ENCODE measurements at regions of chr12 and their contacts with region 1.

Region 1: GRCh38 chr12:108514973-108515814 is at the start of gene FICD:
- DNase-seq: peak; percentile 100
- ATAC-seq: peak; percentile 97 to 98
- total RNA-seq, gene FICD: 4.6 to 6.3 TPM

Region 2: DNA sequence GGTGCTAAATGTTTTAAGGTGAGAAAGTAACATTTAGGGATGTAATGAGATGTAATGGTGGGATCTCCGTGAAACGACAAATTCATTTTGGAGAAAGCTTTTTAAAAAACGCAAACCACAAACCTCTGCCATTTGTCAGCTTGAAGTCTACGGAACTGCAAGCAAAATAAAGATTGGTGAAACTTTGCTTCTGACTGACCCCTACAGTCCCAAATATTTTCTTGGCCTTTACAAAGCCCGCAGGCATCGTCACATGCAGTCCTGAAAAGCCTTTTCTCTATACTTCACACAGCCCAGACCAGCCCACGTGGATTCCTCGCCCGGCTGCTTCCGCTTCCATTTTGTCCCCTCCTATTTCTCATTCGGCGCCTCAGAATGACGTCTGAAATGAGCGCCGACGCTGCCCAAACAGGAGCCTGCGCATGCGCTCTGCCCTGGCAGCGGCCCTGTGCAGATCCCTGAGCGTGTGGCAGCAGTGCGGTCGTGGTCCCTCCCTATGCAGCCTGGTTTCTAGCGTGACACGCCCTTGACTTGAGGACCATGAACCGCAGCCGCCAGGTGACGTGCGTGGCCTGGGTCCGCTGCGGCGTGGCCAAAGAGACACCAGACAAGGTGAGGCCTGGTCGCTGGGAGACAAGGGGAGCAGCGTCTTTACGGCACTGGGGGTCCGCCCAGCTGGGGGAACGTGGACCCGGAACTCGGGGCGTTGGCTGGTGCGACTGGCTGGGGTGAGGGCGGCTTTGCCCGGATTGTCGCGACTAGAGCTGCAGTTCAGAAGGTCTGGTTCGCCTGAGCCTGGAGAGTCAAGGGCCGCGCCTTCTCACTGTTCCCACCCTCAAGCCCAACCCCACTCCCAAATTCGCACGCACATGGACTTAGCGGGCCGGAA is 829.6 kb before region 1 on chr12 and contains the start of gene PWP1:
- intact Hi-C with region 1: loop called in 1 of 2 experiments (anchors 5 kb)
- DNase-seq: peak; percentile 97
- ATAC-seq: peak; percentile 97
- total RNA-seq, gene PWP1: 13.0 to 19.1 TPM

Region 3: DNA sequence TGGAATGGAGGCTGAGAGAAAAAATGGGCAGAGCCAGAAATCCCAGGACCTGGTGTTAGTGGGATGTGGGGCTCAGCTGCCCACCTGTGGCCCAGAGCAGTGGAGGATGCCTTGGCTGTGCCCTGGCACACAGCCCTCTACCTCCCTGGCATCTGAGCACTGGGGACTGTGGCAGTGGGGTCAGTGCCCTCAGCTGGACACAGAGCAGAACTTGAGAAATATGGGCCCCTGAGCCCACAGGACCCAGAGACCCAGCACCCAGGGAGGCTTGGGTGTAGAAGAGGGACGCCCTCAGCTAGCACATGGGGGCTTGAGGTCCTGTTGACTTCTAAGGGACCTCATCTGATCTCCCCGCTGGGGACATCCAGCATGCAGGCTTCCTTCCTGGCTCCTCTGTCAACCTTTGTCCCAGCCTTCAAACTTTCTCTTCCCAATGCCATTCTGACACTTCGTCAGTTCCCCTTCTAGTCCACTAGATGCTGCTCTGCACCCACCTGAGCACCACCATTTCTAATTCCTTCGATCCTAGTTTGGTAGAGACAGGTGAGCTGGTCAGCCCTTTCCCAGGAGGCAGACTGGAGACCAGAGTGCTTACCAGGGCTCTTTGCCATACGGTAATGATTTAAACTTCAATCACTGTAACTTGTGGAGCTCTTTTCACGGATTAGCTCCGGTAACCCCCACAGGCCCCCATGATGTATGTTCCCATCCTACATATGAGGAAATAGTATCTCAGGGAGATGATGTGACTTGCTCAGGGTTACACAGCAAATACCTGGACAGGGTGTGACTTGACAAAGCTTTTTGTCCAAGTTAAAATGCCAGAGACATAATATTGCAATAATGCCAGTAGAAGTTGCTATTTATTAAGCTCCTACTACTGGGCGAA is 597.0 kb before region 1 on chr12:
- intact Hi-C with region 1: loop called in 1 of 2 experiments (anchors 5 kb)
- DNase-seq: no peak
- ATAC-seq: no peak

Region 4: DNA sequence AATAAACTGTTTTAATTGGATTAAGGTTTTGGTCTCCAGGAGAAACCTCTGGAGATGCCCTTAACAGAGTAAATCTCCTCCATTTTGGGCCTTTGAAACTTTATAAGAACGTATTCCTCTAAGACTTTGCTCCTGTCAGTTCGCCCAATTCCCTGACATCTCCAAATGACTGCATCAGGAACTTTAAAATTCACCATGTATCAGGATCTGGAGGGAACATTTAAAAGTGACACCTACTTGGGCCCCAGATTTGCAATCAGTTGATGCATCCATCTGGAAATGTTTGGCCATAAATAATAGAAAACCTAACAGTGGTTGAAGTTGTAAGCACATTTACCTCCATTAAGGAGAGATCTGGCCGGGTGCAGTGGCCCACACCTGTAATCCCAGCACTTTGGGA is 530.2 kb before region 1 on chr12:
- intact Hi-C with region 1: loop called in 1 of 2 experiments (anchors 5 kb)
- DNase-seq: no peak
- ATAC-seq: no peak

Measured in left cardiac atrium (tissue), 4 donors.